ENCODE measurements at regions of chr6 and their contacts with region 1.

Region 1: GRCh38 chr6:33425668-33426577 is 6.1 kb downstream of the SYNGAP1 start:
- DNase-seq: peak; percentile 70 to 94 (median 80)
- ATAC-seq: peak; percentile 54 to 57
- H3K4me3 Mint-ChIP-seq: peak overlapping the region; percentile 87 to 97 (median 91)
- H3K27ac Mint-ChIP-seq: peak overlapping the region; percentile 93 to 99 (median 99)
- H3K4me1 Mint-ChIP-seq: peaks cover 61 to 90% (median 79%) of the 10 kb centered on the region in 4 donors
- H3K27me3 Mint-ChIP-seq: no peaks in the 10 kb centered on the region

Region 2: DNA sequence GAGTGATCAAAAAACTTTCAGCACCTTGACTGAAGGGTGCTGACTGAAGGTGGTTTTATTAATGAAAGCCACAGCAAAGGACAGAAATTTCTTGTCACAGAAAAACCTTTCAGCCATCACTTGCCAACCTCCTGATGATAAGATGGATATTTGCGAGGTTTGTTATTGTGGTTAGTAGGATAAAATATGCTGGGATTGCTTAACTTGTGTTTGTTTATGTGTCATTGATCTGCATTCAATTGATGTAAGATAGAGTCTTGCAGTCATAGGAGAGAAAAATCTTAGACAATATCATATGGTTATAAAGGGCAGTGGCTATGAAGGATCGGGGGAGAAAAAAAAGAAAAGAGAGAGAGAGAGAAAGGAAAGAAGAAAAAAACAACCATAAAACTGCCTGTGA is 1055.4 kb before region 1 on chr6:
- POLR2A ChIA-PET with region 1: no interaction called
- DNase-seq: no peak
- ATAC-seq: no peak
- H3K4me3 Mint-ChIP-seq: no peak overlapping the region
- H3K27ac Mint-ChIP-seq: no peak overlapping the region
- H3K4me1 Mint-ChIP-seq: peaks cover 0 to 2% (median 0%) of the 10 kb centered on the region in 4 donors
- H3K27me3 Mint-ChIP-seq: peaks cover 22 to 46% (median 28%) of the 10 kb centered on the region in 5 donors

Region 3: DNA sequence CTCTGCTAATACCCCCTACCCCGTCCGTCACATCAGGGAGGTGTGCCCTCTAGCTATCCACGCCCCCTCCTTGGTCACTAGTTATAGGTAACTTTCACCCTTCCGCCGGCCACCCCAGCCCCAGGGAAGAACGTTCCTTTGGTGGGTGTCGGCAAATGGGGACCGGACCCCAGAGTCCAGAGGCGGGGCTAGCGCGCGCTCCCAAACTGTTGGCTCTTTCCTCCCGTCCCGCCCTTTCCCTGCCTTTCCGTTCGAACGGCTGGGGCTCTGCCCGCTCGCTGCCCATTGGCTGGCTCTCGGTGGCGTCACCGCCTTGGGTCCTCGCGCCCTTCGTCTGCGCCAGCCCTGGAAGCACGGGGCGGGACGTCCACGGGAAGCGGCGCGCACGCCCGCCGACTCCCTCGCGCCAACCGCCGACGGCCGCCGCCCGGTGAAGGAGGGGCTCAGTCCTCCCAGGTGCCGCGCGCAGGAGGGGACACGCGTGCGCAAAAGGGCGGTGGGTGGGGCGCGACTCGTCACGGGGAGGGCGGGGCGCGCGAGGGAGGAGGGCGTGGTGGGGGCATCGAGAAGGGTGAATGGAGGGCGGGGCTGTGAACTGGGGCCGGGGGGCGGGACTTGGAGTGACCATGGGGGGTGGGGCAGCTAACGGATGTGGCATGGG is 15.7 kb before region 1 on chr6:
- POLR2A ChIA-PET with region 1: interaction called, 49 read pairs
- DNase-seq: peak; percentile 94 to 99 (median 96)
- ATAC-seq: peak; percentile 72 to 83
- H3K4me3 Mint-ChIP-seq: peak overlapping the region; percentile 74 to 96 (median 90)
- H3K27ac Mint-ChIP-seq: peak overlapping the region; percentile 63 to 99 (median 98)
- H3K4me1 Mint-ChIP-seq: peaks cover 20 to 53% (median 44%) of the 10 kb centered on the region in 4 donors
- H3K27me3 Mint-ChIP-seq: no peaks in the 10 kb centered on the region

Measured in naive thymus-derived CD8-positive, alpha-beta T cell (primary cell).